ENCODE measurements at regions of chr19 and their contacts with region 1.

Region 1: GRCh38 chr19:49843265-49843664 is 7.7 kb upstream of the PTOV1 start:
- DNase-seq: no peak
- ATAC-seq: peak; percentile 97
- H3K4me3 Mint-ChIP-seq: peak overlapping the region; percentile 68
- H3K27ac Mint-ChIP-seq: peak overlapping the region; percentile 82
- H3K4me1 Mint-ChIP-seq: peaks cover 45% of the 10 kb centered on the region
- H3K27me3 Mint-ChIP-seq: no peaks in the 10 kb centered on the region
- CTCF ChIP-seq: no peak

Region 2: DNA sequence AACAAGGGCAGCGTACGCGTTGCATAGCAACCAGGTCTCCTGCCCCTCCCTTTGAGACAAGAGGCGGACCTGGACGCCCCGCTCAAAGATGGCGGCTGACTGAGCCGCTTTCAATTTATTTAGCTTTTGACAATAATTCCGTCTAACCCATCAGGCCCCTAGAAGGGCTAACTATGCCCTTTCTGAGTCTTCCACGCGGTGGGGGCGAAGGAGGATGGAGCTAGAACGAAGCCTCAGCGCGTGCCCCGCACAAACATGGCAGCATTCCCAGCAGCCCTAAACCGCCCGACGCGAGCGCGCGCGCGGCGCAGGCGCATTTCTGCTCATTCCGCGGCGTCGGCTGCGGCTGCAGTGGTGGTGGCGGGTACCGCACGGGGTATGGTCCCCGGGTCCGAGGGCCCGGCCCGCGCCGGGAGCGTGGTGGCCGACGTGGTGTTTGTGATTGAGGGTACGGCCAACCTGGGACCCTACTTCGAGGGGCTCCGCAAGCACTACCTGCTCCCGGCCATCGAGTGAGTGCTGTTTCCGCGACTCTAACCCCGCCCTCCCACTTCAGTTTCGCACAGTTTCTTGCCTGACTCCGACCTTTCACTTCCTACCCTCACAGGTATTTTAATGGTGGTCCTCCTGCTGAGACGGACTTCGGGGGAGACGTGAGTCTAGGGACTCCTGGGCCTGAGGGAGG is 25.2 kb before region 1 on chr19 and contains the start of gene MED25:
- CTCF ChIA-PET with region 1: no interaction called
- POLR2A ChIA-PET with region 1: interaction called, 16 read pairs
- intact Hi-C with region 1: loop called (anchors 1 kb)
- DNase-seq: peak; percentile 91
- ATAC-seq: peak; percentile 59
- H3K4me3 Mint-ChIP-seq: peak within 1 kb of the TSS; percentile 98
- H3K27ac Mint-ChIP-seq: peak within 1 kb of the TSS; percentile 99
- H3K4me1 Mint-ChIP-seq: peaks cover 40% of the 10 kb centered on the region
- H3K27me3 Mint-ChIP-seq: no peaks in the 10 kb centered on the region
- CTCF ChIP-seq: no peak
- total RNA-seq, gene MED25: 70.1 and 88.8 TPM in 2 replicates

Region 3: DNA sequence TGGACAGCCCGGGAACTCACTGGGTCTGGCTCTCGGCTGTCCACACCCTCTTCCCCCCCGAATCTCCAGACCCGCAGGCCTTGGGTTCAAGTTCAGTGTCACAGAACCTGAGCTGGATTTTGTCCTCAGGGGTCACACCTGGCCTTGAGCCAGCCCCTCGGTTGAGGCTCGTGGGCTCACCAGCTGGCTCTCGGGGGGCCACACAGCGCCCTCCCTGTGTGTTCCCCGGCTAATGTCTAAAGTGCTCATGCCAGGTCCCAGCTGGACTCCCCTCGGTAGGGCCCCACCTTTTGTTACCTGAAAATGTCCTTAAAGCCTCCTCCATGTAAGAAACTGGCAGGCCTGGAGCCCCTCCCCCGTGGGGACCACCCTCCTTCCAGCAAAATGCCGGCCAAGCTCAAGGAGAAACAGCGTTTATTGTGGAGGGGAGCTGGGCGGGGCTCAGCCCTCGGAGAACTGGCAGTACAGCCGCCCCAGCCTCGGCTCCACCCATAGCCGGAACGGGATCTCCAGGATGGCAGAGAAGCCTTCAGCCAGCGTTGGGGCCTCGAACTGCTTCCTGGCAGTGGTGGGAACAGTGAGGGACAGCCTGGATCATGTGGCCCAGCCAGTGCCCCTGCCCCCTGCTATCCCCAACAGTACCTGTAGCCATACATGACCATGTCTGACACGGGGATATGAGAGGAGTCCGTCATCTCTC is 17.7 kb after region 1 on chr19:
- CTCF ChIA-PET with region 1: no interaction called
- POLR2A ChIA-PET with region 1: interaction called, 13 read pairs
- intact Hi-C with region 1: no loop called
- DNase-seq: no peak
- ATAC-seq: no peak
- H3K4me3 Mint-ChIP-seq: no peak overlapping the region
- H3K27ac Mint-ChIP-seq: no peak overlapping the region
- H3K4me1 Mint-ChIP-seq: peaks cover 13% of the 10 kb centered on the region
- H3K27me3 Mint-ChIP-seq: no peaks in the 10 kb centered on the region
- CTCF ChIP-seq: no peak

Measured in activated B cell treated with CpG ODN at 0.5 μM for 24 hours (primary cell).